Breast epithelium (tissue), 4 donors: ENCODE measurements at regions of chrX and their contacts with region 1.

Region 1: DNA sequence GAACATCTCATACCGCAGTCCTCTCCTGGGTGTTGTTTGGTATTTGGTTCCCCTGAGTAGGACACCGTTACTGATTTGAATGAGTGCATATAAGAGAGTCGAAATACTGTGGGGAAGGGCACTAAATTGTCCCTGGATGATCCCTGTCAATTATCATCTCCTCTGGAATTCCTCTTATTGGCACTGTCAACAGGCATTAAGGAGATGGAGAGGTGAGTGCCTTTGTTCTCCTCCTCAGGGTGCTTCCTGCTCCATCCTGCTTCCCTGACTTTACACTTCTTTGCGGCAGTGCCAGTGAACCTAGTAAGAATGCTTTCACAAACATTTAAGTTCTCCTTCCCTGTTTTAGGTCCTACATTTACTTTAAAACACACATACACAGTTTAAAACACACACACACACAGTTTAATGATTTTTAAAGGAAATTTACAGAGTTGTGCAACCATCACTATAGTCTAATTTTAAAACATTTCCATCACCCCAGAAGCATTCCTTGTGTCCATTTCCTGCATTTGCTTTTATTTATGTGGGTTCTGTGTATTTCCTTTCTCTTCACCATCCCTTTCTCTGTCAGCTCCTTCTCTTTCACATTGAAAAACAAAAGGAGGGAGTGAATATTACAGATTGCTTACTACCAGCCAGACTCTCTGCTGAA is 20.9 kb upstream of the ZRSR2 start:
- DNase-seq: no peak
- H3K4me3 ChIP-seq: no peak overlapping the region
- H3K27ac ChIP-seq: no peak overlapping the region
- H3K4me1 ChIP-seq: no peaks in the 10 kb centered on the region
- H3K27me3 ChIP-seq: no peaks in the 10 kb centered on the region
- CTCF ChIP-seq: no peak
- POLR2A ChIP-seq: no peak

Region 2: GRCh38 chrX:15224747-15225146 is 544.7 kb before region 1 on chrX:
- intact Hi-C with region 1: loop called (anchors 5 kb)
- DNase-seq: no peak
- H3K4me3 ChIP-seq: no peak overlapping the region
- H3K27ac ChIP-seq: no peak overlapping the region
- H3K4me1 ChIP-seq: no peaks in the 10 kb centered on the region
- H3K27me3 ChIP-seq: peaks cover 0 to 46% of the 10 kb centered on the region in 2 donors
- CTCF ChIP-seq: no peak
- POLR2A ChIP-seq: no peak

Region 3: DNA sequence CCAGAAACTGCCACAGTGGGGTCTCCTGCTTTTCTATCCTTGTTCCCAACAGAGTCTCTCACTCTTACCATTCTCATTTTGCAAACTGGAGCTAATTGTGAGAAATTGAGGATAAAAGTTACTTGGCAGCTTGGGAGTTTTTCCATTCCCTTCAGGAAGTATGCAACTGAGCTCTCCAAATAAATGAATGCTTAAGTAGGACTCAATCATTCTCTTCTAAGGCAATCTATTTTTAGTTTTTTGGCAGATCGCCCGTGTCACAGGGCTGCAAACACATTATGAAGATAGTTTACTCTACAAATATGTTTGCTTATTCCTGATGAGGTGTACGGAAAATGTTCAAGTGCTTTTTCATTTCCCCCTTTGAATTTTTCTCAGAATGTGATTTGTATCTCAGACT is 459.3 kb before region 1 on chrX:
- intact Hi-C with region 1: no loop called
- DNase-seq: no peak
- H3K4me3 ChIP-seq: no peak overlapping the region
- H3K27ac ChIP-seq: no peak overlapping the region
- H3K4me1 ChIP-seq: no peaks in the 10 kb centered on the region
- H3K27me3 ChIP-seq: peaks cover 0 to 17% of the 10 kb centered on the region in 2 donors
- CTCF ChIP-seq: no peak
- POLR2A ChIP-seq: no peak

Region 4: GRCh38 chrX:16357902-16358301 is 588.5 kb after region 1 on chrX:
- intact Hi-C with region 1: no loop called
- DNase-seq: no peak
- H3K4me3 ChIP-seq: no peak overlapping the region
- H3K27ac ChIP-seq: no peak overlapping the region
- H3K4me1 ChIP-seq: no peaks in the 10 kb centered on the region
- H3K27me3 ChIP-seq: peaks cover 0 to 8% of the 10 kb centered on the region in 2 donors
- CTCF ChIP-seq: no peak
- POLR2A ChIP-seq: no peak